Mammary epithelial cell (primary cell): ENCODE measurements at regions of chr3 and their contacts with region 1.

Region 1: DNA sequence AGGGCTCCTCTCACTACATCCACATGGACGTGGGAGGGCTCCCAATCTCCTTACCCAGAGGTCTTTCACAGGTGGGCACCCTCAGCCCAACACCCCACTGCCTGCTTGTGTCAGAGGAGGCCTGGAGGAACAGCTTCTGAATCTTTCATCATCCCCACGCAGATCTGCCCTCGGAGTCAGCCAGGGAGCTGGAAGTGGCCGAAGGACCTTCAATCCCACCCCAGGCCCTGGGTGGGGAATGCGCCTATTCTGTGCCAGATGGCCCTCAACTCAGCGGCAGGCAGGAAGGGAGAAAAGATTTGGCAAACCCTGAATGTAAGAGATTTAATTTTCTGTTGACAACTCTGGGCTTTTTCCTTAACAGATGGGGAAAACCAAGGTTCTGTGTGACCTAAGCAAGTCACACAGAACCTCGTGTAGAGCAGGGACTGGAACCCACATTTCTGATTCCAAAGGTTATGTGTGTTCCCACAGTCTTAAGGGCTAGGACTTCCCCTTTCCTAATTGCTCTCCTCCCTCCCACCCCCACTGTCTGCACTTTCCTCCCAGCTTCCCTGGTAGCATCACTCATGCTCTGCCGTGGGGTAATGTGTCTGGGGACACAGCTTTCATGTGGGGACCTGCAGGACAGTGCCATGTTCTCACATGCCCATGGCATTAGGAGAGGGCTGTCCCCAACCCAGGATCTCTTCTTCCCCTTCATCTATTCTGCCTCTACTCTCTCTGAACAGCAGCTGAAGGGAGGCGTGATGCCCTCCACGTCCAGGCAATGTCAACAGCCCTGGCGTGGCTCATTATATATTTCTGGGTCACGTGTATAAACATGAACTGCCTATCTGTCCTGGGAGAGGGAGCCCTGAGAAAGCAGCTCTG is 98.1 kb downstream of the SEMA5B start:
- DNase-seq: peak; percentile 63
- H3K4me3 ChIP-seq: no peak overlapping the region
- H3K27ac ChIP-seq: no peak overlapping the region
- H3K4me1 ChIP-seq: peaks cover 48% of the 10 kb centered on the region
- H3K27me3 ChIP-seq: no peaks in the 10 kb centered on the region
- CTCF ChIP-seq: no peak

Region 2: DNA sequence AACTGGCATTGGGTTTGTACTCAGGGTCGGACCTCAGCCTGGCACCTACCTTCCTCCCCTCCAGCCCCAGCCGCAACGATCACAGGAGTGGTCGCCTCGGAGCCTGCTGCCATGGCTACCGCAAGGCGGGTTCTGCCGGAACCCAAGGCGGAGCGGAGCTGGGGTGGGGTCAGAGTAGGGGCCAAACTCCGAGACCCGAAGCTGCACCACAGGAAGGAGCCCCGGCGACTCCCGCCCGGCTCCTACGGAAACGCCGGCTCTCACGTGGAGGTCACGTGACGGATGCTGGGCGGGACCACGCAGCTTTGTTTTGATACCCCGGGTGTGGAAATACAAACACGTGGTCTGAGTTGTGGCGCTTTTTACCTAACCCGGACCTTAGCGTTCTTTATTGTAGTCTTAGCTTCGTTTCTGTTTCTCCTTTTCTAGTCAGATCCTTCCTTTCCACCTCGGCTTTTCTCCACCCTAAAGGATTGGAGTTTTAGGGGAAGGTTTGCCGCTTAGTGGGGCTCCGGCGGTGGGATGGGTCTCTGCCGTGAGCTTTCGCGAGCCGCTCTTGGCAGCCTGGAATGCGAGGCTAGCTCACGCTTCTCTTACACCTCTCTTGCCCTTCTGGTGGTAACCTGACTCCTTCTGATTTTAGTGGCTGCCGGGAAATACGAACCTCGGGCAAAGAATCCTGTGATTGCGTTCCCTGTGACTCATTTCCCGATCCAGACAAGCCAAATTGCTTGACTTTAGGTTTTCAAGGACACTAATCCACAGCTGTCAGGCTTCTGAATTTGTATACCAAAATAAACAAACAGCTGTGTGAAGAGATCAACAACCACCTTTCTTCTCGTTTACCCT is 135.6 kb before region 1 on chr3 and contains the start of gene HSPBAP1:
- CTCF ChIA-PET with region 1: no interaction called
- dilution Hi-C with region 1: no loop called
- in situ Hi-C with region 1: loop called in 1 of 2 experiments (anchors 5 kb)
- intact Hi-C with region 1: loop called (anchors 5 kb)
- DNase-seq: peak; percentile 92
- H3K4me3 ChIP-seq: peak within 1 kb of the TSS; percentile 72 to 85 (median 81)
- H3K27ac ChIP-seq: peak within 1 kb of the TSS; percentile 94
- H3K4me1 ChIP-seq: peaks cover 49% of the 10 kb centered on the region
- H3K27me3 ChIP-seq: no peaks in the 10 kb centered on the region
- CTCF ChIP-seq: no peak
- total RNA-seq, gene HSPBAP1: 9.2 to 9.6 TPM

Region 3: GRCh38 chr3:122890077-122890719 is 39.2 kb before region 1 on chr3:
- CTCF ChIA-PET with region 1: interaction called, 5 read pairs
- dilution Hi-C with region 1: no loop called
- in situ Hi-C with region 1: no loop called
- intact Hi-C with region 1: loop called (anchors 1 kb)
- DNase-seq: peak; percentile 94
- H3K4me3 ChIP-seq: no peak overlapping the region
- H3K27ac ChIP-seq: peak overlapping the region; percentile 56
- H3K4me1 ChIP-seq: peaks cover 49% of the 10 kb centered on the region
- H3K27me3 ChIP-seq: no peaks in the 10 kb centered on the region
- CTCF ChIP-seq: no peak